ENCODE measurements at regions of chr18 and their contacts with region 1.

Region 1: GRCh38 chr18:79405781-79406575 is 10.2 kb downstream of the NFATC1 start:
- DNase-seq: peak; percentile 91
- H3K4me3 Mint-ChIP-seq: peak overlapping the region; percentile 80
- H3K27ac Mint-ChIP-seq: peak overlapping the region; percentile 93
- H3K4me1 Mint-ChIP-seq: peaks cover 57% of the 10 kb centered on the region
- H3K27me3 Mint-ChIP-seq: no peaks in the 10 kb centered on the region

Region 2: DNA sequence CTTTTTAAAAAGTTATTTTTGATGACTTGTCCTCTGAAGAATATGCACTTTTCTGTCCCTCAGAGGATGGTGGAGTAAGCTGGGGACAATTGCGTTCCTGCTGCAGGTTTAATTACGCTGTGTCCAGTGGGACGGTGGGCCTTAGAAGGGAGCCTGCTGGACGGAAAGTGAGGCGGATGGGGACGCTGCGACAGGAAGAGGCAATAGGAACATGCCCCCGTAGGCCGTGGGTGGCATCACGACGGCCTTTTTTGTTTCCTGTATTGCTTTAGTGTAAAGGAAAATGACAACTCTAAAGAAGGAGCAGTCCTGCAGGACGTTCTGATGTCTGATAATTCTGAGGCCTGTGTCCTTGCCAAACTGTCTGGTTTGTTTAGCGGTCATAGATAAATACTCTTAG is 111.4 kb after region 1 on chr18:
- CTCF ChIA-PET with region 1: interaction called, 3 read pairs
- POLR2A ChIA-PET with region 1: interaction called, 40 read pairs
- DNase-seq: peak; percentile 64
- H3K4me3 Mint-ChIP-seq: peak overlapping the region; percentile 52
- H3K27ac Mint-ChIP-seq: peak overlapping the region; percentile 85
- H3K4me1 Mint-ChIP-seq: peaks cover 60% of the 10 kb centered on the region
- H3K27me3 Mint-ChIP-seq: no peaks in the 10 kb centered on the region

Region 3: DNA sequence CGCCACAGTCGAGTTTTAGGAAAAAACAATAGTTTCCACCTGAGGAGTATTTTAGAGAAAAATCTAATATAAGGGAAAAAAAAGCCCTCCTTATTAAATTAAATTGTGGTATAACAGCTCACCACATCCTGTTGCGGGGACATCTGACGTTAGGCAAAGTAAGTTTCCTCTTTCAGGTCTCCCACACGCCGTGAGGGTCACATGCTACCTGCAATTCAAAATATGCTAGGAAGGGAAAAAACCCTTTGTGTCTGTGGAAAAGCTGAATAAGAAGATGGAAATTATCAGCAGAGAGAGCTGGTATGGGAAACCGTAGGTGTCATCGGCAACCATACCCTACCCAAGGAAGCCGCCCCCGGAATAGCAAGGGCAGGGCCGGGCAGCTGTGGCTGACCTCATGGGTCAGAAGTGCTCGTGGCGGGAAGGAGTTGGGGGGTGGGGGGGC is 117.8 kb after region 1 on chr18:
- CTCF ChIA-PET with region 1: interaction called, 8 read pairs
- POLR2A ChIA-PET with region 1: interaction called, 40 read pairs
- DNase-seq: peak; percentile 80
- H3K4me3 Mint-ChIP-seq: peak overlapping the region; percentile 65
- H3K27ac Mint-ChIP-seq: peak overlapping the region; percentile 88
- H3K4me1 Mint-ChIP-seq: peaks cover 60% of the 10 kb centered on the region
- H3K27me3 Mint-ChIP-seq: no peaks in the 10 kb centered on the region

Region 4: DNA sequence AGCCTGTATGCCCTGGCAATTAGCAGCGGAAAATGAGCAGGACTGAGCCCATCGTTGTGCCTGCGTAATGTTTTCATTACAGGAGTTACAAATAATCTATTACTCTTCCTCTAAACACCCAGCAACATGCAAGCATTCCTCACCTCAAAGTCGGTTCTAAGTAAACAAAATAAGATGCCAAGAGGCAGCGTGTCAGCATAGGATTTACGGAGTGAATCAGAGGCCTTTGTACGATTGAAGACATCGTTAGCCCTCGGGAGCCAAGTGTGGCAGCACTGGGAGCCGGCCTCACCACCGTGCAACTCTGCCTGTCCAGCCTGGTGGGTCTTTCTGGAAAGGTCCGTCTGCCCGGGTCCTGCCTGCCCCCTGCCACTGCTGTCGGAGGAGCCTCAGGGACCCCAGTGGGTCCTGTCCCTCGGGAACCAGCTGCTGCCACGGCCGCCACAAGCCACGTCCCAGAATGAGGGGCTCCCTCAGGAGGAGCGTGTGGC is 193.5 kb after region 1 on chr18:
- CTCF ChIA-PET with region 1: no interaction called
- POLR2A ChIA-PET with region 1: no interaction called
- DNase-seq: no peak
- H3K4me3 Mint-ChIP-seq: no peak overlapping the region
- H3K27ac Mint-ChIP-seq: no peak overlapping the region
- H3K4me1 Mint-ChIP-seq: no peaks in the 10 kb centered on the region
- H3K27me3 Mint-ChIP-seq: peaks cover 2% of the 10 kb centered on the region

Measured in activated CD4-positive, alpha-beta memory T cell treated with anti-CD3 and anti-CD28 coated beads, Interleukin-2, amount 10 ng/mL, durations not matched to agents 7 days and 5 days (primary cell).